CD8-positive, alpha-beta memory T cell (primary cell): ENCODE measurements at regions of chr6 and their contacts with region 1.

Region 1: DNA sequence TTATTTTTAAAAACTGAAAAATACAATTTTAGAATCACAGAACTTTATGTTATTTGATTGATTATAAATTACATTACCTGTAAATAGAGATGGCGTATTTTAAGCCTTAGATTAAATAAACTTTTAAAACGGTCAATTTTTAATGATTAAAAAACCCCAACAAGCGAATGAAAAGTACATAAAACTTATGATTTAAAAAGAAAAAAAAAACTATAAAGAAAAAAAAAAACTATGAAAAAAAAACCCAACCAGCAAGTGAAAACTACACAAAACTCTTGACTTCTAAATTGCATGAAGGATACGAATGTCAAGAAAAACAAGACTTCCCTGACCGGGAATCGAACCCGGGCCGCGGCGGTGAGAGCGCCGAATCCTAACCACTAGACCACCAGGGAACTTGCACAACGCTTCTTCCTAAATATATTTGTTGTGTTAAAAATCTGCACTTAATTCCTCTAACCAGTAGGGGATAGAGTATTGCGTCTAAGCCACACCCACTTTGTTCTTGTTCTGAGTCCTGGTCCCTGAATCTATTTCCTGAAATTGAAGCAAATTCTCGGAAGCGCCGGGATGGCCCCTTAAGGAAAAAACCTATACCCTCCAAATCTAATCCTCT is 10.7 kb upstream of the NCOA7 start:
- DNase-seq: peak; percentile 75 to 94 (median 90)
- H3K4me3 ChIP-seq: peak overlapping the region; percentile 86
- H3K4me3 Mint-ChIP-seq: no peak overlapping the region
- H3K27ac ChIP-seq: peak overlapping the region; percentile 94
- H3K27ac Mint-ChIP-seq: no peak overlapping the region
- H3K4me1 ChIP-seq: peaks cover 17% of the 10 kb centered on the region
- H3K4me1 Mint-ChIP-seq: peaks cover 0 to 11% (median 10%) of the 10 kb centered on the region in 3 donors
- H3K27me3 ChIP-seq: no peaks in the 10 kb centered on the region
- H3K27me3 Mint-ChIP-seq: no peaks in the 10 kb centered on the region

Region 2: GRCh38 chr6:125611573-125612344 is 168.3 kb before region 1 on chr6:
- CTCF ChIA-PET with region 1: no interaction called
- POLR2A ChIA-PET with region 1: interaction called, 12 read pairs
- DNase-seq: no peak
- H3K4me3 ChIP-seq: no peak overlapping the region
- H3K4me3 Mint-ChIP-seq: no peak overlapping the region
- H3K27ac ChIP-seq: no peak overlapping the region
- H3K27ac Mint-ChIP-seq: no peak overlapping the region
- H3K4me1 ChIP-seq: no peaks in the 10 kb centered on the region
- H3K4me1 Mint-ChIP-seq: no peaks in the 10 kb centered on the region
- H3K27me3 ChIP-seq: no peaks in the 10 kb centered on the region
- H3K27me3 Mint-ChIP-seq: peaks cover 6 to 36% of the 10 kb centered on the region in 2 donors

Region 3: GRCh38 chr6:125986300-125987025 is 206.4 kb after region 1 on chr6 and contains the start of gene TRMT11:
- CTCF ChIA-PET with region 1: interaction called, 11 read pairs
- POLR2A ChIA-PET with region 1: interaction called, 25 read pairs
- DNase-seq: peak; percentile 72 to 91 (median 82)
- H3K4me3 ChIP-seq: peak within 1 kb of the TSS; percentile 92
- H3K4me3 Mint-ChIP-seq: peak within 1 kb of the TSS in 6 of 7 donors; percentile 5 to 54 (median 33)
- H3K27ac ChIP-seq: peak within 1 kb of the TSS; percentile 87
- H3K27ac Mint-ChIP-seq: peak within 1 kb of the TSS in 1 of 8 donors; percentile 5
- H3K4me1 ChIP-seq: peaks cover 34% of the 10 kb centered on the region
- H3K4me1 Mint-ChIP-seq: peaks cover 9 to 15% (median 13%) of the 10 kb centered on the region in 3 donors
- H3K27me3 ChIP-seq: no peaks in the 10 kb centered on the region
- H3K27me3 Mint-ChIP-seq: no peaks in the 10 kb centered on the region
- total RNA-seq, gene TRMT11: 35.8 to 37.9 TPM